ENCODE measurements at regions of chr15 and their contacts with region 1.

Region 1: GRCh38 chr15:51649659-51650521 is 27.3 kb upstream of the DMXL2 start:
- DNase-seq: no peak
- ATAC-seq: peak; percentile 90 to 95 (median 92)
- H3K4me3 ChIP-seq: no peak overlapping the region
- H3K27ac ChIP-seq: no peak overlapping the region
- H3K4me1 ChIP-seq: no peaks in the 10 kb centered on the region
- H3K27me3 ChIP-seq: no peaks in the 10 kb centered on the region
- CTCF ChIP-seq: peak; percentile 71 to 88 (median 80)
- POLR2A ChIP-seq: no peak

Region 2: GRCh38 chr15:51332206-51333124 is 317.4 kb before region 1 on chr15:
- intact Hi-C with region 1: no loop called
- DNase-seq: no peak
- ATAC-seq: peak in 2 of 4 donors; percentile 29 to 50
- H3K4me3 ChIP-seq: no peak overlapping the region
- H3K27ac ChIP-seq: no peak overlapping the region
- H3K4me1 ChIP-seq: no peaks in the 10 kb centered on the region
- H3K27me3 ChIP-seq: no peaks in the 10 kb centered on the region
- CTCF ChIP-seq: no peak
- POLR2A ChIP-seq: no peak

Region 3: DNA sequence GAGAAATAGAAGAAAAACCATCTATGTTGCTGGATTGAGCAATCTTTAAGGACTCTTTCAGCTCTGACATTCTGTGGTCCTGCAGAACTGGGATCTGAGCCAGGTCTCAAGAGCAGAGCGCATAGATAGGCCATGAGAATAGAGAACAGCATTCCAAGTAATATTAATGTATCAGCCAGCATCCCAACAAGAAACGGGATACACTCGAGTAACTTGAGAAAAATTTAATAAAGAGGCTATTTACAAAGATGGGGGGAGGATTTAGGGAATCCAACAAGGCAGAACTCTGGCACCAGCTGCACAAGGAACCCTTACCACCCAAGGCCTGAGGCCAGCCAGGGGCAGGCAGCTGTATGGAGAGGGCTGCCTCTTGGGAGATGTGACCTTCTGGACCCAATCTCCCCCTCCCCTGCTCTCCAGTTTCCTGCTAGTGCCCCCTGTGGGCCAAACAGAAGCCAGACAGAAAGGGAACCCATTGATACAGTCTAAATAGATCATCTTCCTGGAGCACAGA is 109.7 kb after region 1 on chr15:
- intact Hi-C with region 1: loop called in 1 of 2 experiments (anchors 10 kb)
- DNase-seq: no peak
- ATAC-seq: peak in 2 of 4 donors; percentile 33 to 43
- H3K4me3 ChIP-seq: no peak overlapping the region
- H3K27ac ChIP-seq: no peak overlapping the region
- H3K4me1 ChIP-seq: no peaks in the 10 kb centered on the region
- H3K27me3 ChIP-seq: no peaks in the 10 kb centered on the region
- CTCF ChIP-seq: peak in 1 of 4 donors; percentile 10
- POLR2A ChIP-seq: no peak

Region 4: GRCh38 chr15:51771773-51772172 is 121.9 kb after region 1 on chr15:
- intact Hi-C with region 1: loop called (anchors 5 to 10 kb)
- DNase-seq: no peak
- ATAC-seq: no peak
- H3K4me3 ChIP-seq: no peak overlapping the region
- H3K27ac ChIP-seq: no peak overlapping the region
- H3K4me1 ChIP-seq: peaks cover 0 to 5% (median 2%) of the 10 kb centered on the region in 4 donors
- H3K27me3 ChIP-seq: no peaks in the 10 kb centered on the region
- CTCF ChIP-seq: no peak
- POLR2A ChIP-seq: no peak